ENCODE measurements at regions of chr19 and their contacts with region 1.

Region 1: GRCh38 chr19:13846557-13847406 is 30.2 kb upstream of the NANOS3 start:
- DNase-seq: peak; percentile 90
- ATAC-seq: peak; percentile 36
- H3K4me3 ChIP-seq: peak overlapping the region; percentile 48 to 61
- H3K27ac ChIP-seq: peak overlapping the region; percentile 96
- H3K4me1 ChIP-seq: peaks cover 68 to 89% of the 10 kb centered on the region in 2 experiments
- H3K27me3 ChIP-seq: no peaks in the 10 kb centered on the region
- CTCF ChIP-seq: no peak
- POLR2A ChIP-seq: no peak
- RAD21 ChIP-seq: no peak

Region 2: DNA sequence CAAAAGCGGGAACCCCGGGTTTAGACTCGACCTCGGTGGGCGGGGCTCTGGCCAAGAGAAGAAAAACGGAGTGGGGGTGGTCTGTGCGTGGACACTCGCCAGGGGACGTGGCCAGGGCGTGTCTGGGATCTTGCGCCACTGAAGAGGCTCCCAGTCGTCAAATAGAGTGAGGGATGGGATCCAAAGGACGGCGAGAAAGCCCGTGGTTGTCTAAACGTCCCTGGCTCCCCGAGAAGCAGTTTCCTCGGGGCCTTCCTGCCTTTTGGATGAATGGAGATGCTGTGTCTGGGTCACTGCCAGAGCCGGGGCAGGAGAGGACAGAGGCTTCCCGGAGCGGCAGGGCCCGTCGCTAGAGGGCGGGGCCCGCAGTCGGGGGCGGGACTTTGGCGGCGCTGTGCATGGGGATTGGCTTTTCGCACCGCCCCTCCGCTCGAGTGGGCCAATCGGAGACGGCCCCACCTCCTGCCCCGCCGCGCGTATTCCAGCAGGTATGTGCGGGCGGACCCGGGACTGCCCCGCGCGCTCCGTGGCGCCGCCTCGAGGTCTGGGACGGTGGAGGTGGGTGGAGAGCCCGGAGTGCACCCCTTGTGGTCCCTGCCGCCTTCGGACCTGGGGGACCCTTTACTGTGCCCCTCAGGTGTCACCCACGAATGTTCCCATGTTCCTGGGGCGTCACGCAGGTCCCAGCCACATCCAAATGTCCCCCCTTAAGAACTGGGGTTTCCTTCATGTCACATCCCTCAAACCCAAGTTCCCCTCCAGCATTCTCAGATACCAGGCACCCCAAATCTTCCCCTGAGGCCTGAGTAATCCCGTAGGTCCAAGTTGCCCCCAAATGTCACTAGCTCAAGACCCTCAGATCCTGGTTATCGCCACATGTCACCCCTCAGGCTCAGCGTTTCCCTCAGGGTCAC is 13.2 kb before region 1 on chr19:
- CTCF ChIA-PET with region 1: interaction called, 5 read pairs
- POLR2A ChIA-PET with region 1: interaction called, 64 read pairs
- RAD21 ChIA-PET with region 1: no interaction called
- intact Hi-C with region 1: no loop called
- DNase-seq: no peak
- ATAC-seq: peak; percentile 94
- H3K4me3 ChIP-seq: peak overlapping the region in 1 of 2 experiments; percentile 5; a peak in 2 of 4 replicates
- H3K27ac ChIP-seq: peak overlapping the region; percentile 38
- H3K4me1 ChIP-seq: peaks cover 37 to 55% of the 10 kb centered on the region in 2 experiments
- H3K27me3 ChIP-seq: no peaks in the 10 kb centered on the region
- CTCF ChIP-seq: peak in 2 of 3 experiments; percentile 64 to 70; a peak in 5 of 6 replicates
- POLR2A ChIP-seq: no peak
- RAD21 ChIP-seq: peak; percentile 60